HCT116 (cell line): ENCODE measurements at regions of chr19 and their contacts with region 1.

Region 1: DNA sequence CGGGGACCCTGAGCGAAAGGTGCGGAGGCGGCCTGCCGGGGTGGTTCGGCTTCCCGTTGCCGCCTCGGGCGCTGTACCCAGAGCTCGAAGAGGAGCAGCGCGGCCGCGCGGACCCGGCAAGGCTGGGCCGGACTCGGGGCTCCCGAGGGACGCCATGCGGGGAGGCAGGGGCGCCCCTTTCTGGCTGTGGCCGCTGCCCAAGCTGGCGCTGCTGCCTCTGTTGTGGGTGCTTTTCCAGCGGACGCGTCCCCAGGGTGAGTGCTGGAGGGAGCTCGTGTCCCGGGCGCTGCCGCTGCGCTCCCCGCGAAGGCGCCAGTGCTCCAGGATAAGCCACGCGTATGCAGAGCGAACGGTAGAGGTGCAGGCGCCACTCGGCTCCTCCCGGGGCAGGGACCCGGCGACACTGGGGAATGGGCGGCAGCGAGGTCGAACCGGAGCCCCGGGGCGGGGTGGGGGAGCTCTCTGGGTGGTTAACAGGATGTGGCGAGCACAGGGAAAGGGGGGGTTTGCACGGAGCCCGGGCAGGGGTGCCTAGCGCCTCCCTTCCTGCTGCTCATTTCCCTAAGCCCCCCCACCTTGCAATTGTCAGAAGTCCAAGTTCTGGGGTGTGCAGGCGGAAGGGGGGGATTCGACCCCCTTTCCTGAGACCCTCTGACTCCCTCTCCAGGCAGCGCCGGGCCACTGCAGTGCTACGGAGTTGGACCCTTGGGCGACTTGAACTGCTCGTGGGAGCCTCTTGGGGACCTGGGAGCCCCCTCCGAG is at the start of gene IL27RA:
- DNase-seq: no peak
- ATAC-seq: peak; percentile 78
- H3K4me3 ChIP-seq: peak within 1 kb of the TSS; percentile 72 to 81
- H3K27ac ChIP-seq: peak within 1 kb of the TSS; percentile 87
- H3K4me1 ChIP-seq: peaks cover 3 to 15% of the 10 kb centered on the region in 2 experiments
- H3K27me3 ChIP-seq: no peaks in the 10 kb centered on the region
- CTCF ChIP-seq: peak; percentile 47 to 86 (median 72); a peak in 5 of 6 replicates
- POLR2A ChIP-seq: no peak
- RAD21 ChIP-seq: peak; percentile 55
- total RNA-seq, gene IL27RA: 18.3 TPM

Region 2: DNA sequence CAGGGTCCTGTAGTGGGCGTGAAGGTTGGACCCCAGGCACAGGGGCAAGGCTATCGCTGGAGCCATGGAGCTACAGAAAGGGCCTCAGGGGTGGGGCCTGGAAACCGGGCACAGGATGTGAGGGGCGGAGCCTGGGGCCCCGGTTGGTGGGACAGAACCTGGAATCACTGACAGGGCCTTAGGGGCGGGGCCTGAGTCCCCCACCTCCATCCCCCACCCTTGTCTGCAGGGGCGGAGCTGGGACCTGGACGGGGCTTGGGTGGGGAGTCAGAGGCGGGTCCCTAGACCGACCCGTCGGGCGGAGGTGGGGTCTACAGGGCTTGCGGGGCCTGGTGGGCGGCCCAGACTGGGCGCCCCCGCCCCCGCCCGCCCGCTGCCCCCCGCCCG is 53.6 kb before region 1 on chr19:
- CTCF ChIA-PET with region 1: no interaction called
- POLR2A ChIA-PET with region 1: no interaction called
- RAD21 ChIA-PET with region 1: no interaction called
- intact Hi-C with region 1: no loop called
- DNase-seq: no peak
- ATAC-seq: peak; percentile 66
- H3K4me3 ChIP-seq: no peak overlapping the region
- H3K27ac ChIP-seq: no peak overlapping the region
- H3K4me1 ChIP-seq: peaks cover 0 to 10% of the 10 kb centered on the region in 2 experiments; a peak in 3 of 4 replicates
- H3K27me3 ChIP-seq: no peaks in the 10 kb centered on the region
- CTCF ChIP-seq: no peak
- POLR2A ChIP-seq: no peak
- RAD21 ChIP-seq: no peak

Region 3: GRCh38 chr19:14006243-14006765 is 25.6 kb before region 1 on chr19 and contains the start of gene RFX1:
- CTCF ChIA-PET with region 1: interaction called, 8 read pairs
- POLR2A ChIA-PET with region 1: interaction called, 10 read pairs
- RAD21 ChIA-PET with region 1: no interaction called
- intact Hi-C with region 1: no loop called
- DNase-seq: peak; percentile 100
- ATAC-seq: peak; percentile 85
- H3K4me3 ChIP-seq: peak within 1 kb of the TSS; percentile 70 to 76
- H3K27ac ChIP-seq: peak within 1 kb of the TSS; percentile 79
- H3K4me1 ChIP-seq: peaks cover 5 to 26% of the 10 kb centered on the region in 2 experiments; a peak in 3 of 4 replicates
- H3K27me3 ChIP-seq: no peaks in the 10 kb centered on the region
- CTCF ChIP-seq: no peak
- POLR2A ChIP-seq: no peak
- RAD21 ChIP-seq: no peak
- total RNA-seq, gene RFX1: 16.3 TPM

Region 4: GRCh38 chr19:14059093-14059480 is 27.2 kb after region 1 on chr19:
- CTCF ChIA-PET with region 1: interaction called, 11 read pairs
- POLR2A ChIA-PET with region 1: no interaction called
- RAD21 ChIA-PET with region 1: no interaction called
- intact Hi-C with region 1: no loop called
- DNase-seq: no peak
- ATAC-seq: peak; percentile 55; the same call in 1 of the 2 replicates
- H3K4me3 ChIP-seq: peak overlapping the region in 1 of 2 experiments; percentile 56; a peak in 2 of 4 replicates
- H3K27ac ChIP-seq: no peak overlapping the region
- H3K4me1 ChIP-seq: peaks cover 22 to 36% of the 10 kb centered on the region in 2 experiments
- H3K27me3 ChIP-seq: no peaks in the 10 kb centered on the region
- CTCF ChIP-seq: peak; percentile 41 to 92 (median 90); a peak in 5 of 6 replicates
- POLR2A ChIP-seq: no peak
- RAD21 ChIP-seq: peak; percentile 36